ENCODE measurements at regions of chr2 and their contacts with region 1.

Region 1: DNA sequence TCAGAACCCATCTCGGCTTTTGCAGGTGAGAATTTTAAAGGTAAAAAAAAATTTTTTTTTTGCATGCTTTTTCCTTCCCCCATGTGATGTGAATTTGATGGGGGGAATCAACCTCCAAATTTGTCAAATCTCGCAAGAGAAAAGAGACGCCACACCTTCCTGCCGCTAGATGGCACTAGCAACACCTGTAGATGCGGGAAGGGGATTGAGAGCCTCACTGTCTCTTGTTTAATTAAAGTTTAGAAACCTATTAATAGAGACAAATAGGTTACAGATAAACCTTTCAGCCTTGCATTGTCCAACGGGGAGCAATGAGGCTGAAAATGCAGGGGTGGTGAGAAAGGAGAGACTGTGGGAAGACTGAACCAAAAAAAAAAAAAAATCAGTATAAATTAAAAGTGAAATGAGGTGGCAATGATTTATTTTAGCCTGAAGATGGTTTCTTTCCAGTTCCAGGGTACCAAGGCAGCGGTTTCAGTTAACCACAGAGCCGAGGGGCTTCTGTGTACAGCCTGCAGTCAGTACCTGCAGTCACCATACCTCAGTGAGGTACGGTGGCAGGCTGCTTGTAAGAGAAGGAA is 84.6 kb downstream of the NRP2 start:
- DNase-seq: peak; percentile 57
- H3K4me3 ChIP-seq: no peak overlapping the region
- H3K27ac ChIP-seq: no peak overlapping the region
- H3K4me1 ChIP-seq: no peaks in the 10 kb centered on the region
- CTCF ChIP-seq: peak; percentile 98

Region 2: GRCh38 chr2:205680067-205680466 is 86.8 kb before region 1 on chr2:
- CTCF ChIA-PET with region 1: no interaction called
- POLR2A ChIA-PET with region 1: no interaction called
- intact Hi-C with region 1: no loop called
- DNase-seq: peak; percentile 88
- H3K4me3 ChIP-seq: no peak overlapping the region
- H3K27ac ChIP-seq: no peak overlapping the region
- H3K4me1 ChIP-seq: peaks cover 30% of the 10 kb centered on the region
- CTCF ChIP-seq: peak; percentile 92

Region 3: DNA sequence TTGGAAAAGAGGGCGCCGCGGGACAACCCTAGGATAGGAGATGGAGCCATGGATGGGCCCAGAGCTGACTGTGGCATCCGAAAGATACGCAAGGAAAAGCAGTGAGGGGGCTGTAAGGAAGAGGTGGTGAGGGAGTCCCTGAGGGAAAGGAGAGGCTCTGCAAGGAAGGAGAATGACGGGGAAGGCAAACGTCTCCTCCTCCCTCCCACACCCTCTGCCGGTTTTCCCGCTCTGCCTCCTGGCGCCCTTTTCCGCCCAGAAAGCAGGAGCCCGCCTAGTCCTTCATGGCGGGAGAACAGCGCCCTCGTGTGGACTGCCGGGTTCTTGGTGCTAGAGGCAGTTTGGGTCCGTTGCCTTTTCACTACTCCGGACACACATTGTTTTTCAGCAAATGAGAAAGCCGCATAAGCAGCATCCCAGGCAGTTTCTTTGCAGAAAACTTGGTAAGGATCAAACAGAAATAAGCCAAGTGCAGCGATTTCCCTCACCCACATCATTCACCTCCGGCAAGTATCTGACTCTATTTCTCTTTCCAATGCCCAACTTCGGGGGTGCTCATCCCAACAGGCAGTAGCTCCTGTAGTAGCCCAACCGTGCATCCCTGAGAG is 118.7 kb after region 1 on chr2:
- CTCF ChIA-PET with region 1: no interaction called
- POLR2A ChIA-PET with region 1: no interaction called
- intact Hi-C with region 1: loop called (anchors 5 kb)
- DNase-seq: peak; percentile 65
- H3K4me3 ChIP-seq: no peak overlapping the region
- H3K27ac ChIP-seq: no peak overlapping the region
- H3K4me1 ChIP-seq: no peaks in the 10 kb centered on the region
- CTCF ChIP-seq: peak; percentile 87